ENCODE measurements at regions of chr11 and their contacts with region 1.

Region 1: DNA sequence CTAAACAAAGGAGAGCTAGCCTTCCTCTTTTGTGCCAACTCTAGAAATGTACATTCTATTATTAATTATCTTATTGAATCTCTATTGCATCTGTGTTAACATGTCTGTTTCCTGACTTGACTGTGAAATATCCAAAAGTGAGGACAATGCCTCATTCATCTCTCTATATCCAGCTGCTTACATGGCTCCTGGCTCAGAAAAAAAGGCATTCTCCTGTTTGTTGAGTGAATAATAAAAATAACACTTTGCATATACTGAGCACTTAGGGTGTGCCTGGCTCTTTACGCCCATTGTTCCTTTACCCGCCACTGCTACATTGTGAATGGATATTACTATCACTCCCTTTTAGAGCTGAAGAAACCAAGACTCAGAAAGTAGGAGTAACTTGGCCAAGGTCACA is 19.9 kb downstream of the NRXN2 start:
- DNase-seq: no peak
- H3K27ac ChIP-seq: no peak overlapping the region
- CTCF ChIP-seq: no peak

Region 2: DNA sequence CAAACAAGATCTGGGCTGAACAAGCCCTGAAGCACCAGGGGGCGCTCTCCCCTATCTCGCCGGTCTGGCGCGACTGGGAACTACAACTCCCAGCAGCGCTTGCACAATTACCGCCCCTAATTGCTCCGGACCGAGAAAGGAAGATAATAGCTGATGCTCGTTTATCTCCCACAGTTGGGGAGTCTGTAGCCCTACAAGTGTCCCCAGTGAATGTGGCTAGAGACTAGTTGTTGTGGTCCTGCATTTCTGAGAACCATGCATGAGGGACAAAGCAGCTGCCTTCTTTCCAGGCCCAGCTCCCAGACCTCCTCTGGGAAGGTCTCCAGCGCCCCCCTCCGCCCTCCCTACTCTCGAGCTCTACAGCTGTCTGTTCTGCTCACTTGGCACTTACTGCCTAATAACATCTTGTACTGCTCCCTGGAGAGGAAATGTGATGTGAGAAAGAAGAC is 14.5 kb before region 1 on chr11:
- CTCF ChIA-PET with region 1: interaction called, 19 read pairs
- POLR2A ChIA-PET with region 1: interaction called, 3 read pairs
- DNase-seq: peak; percentile 68
- H3K27ac ChIP-seq: no peak overlapping the region
- CTCF ChIP-seq: peak; percentile 93

Region 3: DNA sequence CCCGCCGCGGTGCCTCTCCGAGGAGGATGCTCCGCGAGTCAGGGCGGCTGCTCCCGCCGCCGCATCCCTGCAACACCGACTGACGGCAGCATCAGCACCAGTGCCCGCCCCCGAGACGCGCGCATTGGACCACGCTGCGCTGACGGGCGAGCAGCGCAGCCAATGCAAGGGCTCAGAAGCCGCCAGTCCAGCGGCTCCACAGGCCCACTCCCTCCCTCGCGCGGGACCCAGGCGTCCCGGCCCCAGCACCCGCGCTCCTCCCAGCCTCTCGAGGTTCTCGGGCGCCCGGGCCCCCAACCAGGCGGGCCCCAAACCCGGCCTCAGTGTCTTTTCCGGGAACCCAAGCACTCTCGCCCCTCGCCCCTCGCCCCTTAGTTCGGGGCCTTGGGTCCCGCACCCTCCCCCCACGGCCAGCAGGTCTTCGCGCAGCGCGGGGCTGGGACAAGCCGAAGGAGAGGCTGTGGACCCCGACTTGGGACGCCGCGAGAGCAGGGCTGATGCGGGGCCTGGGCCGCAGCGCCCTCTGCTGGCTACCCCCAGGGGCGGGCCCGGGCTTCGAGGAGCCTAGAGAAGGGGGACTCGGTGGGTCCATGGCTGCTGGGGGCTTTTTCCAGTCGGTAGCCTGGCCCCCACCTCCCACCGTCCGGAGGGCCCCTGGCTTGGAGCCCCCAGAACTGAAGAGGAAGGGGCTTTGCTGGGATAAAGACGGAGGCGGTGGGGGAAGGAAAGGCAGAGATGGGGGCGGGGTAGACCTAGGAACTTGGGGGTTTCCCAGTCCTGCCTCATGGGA is 20.3 kb after region 1 on chr11 and contains the start of gene NRXN2:
- CTCF ChIA-PET with region 1: no interaction called
- POLR2A ChIA-PET with region 1: no interaction called
- DNase-seq: peak; percentile 95
- H3K27ac ChIP-seq: no peak within 1 kb of the TSS
- CTCF ChIP-seq: peak; percentile 96

Region 4: DNA sequence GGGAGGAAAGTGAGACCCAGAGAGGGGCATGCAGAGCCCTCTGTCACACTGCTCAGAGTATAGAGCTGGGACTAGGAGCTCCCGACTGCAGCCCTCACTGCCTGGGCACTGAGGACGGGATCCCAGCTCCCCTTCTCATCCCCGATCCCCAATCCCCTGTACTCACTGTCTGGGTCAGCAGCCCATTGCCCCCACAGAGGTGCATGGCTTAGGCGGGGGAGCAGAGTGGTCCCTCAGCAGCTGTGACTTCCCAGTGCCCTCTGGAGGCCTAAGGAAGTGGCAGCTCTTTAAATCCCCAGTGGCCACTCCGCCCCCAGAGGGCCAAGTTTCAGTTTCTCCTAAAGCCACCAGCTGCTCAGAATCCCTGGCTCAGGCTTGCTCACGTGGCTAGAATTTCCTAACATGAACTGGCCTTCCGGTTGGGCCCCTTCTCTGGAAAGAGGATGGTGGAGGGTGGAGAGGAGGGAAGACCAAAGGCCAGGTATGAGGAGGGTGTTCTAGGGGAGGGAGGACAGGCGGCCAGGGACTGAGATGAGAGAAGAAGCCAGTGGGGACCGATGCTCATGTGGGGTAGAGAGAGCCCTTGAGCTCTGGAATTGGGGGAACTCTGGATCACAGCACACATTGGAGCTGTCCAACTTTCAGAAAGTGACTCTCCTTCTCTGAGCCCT is 293.8 kb after region 1 on chr11 and contains the start of gene BATF2:
- CTCF ChIA-PET with region 1: no interaction called
- POLR2A ChIA-PET with region 1: no interaction called
- DNase-seq: peak; percentile 60
- H3K27ac ChIP-seq: peak within 1 kb of the TSS; percentile 59
- CTCF ChIP-seq: no peak